ENCODE measurements at regions of chr20 and their contacts with region 1.

Region 1: DNA sequence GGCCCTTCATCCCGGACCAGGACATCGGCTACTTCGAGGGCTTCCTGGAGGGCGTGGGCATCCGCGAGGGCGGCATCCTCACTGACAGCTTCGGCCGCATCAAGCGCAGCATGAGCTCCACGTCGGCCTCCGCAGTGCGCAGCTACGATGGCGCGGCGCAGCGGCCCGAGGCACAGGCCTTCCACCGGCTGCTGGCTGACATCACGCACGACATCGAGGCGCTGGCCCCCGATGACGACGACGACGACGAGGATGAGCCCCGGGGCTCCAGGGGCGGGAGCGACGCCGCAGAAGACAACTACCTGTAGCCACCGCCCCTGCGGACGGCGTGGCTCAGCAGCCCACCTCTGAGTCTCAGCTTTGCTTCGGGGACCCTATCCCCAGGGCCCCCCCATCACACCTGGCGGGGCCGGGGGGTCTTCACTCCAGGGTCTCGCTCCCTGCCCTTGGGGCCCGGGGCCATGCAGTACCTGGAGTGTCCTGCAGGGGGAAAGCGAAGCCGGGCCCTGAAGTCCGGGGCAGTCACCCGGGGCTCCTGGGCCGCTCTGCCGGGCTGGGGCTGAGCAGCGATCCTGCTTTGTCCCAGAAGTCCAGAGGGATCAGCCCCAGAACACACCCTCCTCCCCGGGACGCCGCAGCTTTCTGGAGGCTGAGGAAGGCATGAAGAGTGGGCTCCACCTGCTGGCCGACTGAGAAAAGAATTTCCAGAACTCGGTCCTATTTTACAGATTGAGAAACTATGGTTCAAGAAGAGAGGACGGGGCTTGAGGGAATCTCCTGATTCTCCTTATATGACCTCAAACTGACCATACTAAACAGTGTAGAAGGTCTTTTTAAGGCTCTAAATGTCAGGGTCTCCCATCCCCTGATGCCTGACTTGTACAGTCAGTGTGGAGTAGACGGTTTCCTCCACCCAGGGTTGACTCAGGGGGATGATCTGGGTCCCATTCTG is 20.8 kb upstream of the HCK start:
- DNase-seq: peak in 2 of 3 donors; percentile 65 to 67
- H3K4me3 ChIP-seq: peak overlapping the region in 6 of 7 experiments; percentile 23 to 58 (median 50)
- H3K27ac ChIP-seq: no peak overlapping the region
- H3K4me1 ChIP-seq: peaks cover 2 to 16% (median 8%) of the 10 kb centered on the region in 4 experiments
- H3K27me3 ChIP-seq: peaks cover 0 to 5% (median 0%) of the 10 kb centered on the region in 5 experiments

Region 2: DNA sequence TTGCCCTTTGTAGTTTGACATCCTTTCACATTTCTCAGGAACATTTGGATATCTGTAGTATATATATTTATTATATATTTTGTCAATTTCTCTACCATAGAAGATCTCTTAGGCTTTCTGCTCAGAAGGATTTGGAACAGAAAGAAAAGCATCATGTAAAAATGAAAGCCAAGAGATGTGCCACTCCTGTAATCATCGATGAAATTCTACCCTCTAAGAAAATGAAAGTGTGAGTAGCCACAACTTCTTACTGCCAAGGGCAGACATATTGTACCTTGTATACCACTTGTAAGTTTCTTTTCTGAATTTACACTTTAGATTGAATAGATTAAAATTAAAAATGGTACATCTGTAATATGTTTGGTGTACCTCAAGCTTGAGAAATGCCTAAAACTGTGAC is 261.0 kb before region 1 on chr20:
- CTCF ChIA-PET with region 1: no interaction called
- POLR2A ChIA-PET with region 1: no interaction called
- DNase-seq: no peak
- H3K4me3 ChIP-seq: no peak overlapping the region
- H3K27ac ChIP-seq: no peak overlapping the region
- H3K4me1 ChIP-seq: no peaks in the 10 kb centered on the region
- H3K27me3 ChIP-seq: no peaks in the 10 kb centered on the region

Region 3: DNA sequence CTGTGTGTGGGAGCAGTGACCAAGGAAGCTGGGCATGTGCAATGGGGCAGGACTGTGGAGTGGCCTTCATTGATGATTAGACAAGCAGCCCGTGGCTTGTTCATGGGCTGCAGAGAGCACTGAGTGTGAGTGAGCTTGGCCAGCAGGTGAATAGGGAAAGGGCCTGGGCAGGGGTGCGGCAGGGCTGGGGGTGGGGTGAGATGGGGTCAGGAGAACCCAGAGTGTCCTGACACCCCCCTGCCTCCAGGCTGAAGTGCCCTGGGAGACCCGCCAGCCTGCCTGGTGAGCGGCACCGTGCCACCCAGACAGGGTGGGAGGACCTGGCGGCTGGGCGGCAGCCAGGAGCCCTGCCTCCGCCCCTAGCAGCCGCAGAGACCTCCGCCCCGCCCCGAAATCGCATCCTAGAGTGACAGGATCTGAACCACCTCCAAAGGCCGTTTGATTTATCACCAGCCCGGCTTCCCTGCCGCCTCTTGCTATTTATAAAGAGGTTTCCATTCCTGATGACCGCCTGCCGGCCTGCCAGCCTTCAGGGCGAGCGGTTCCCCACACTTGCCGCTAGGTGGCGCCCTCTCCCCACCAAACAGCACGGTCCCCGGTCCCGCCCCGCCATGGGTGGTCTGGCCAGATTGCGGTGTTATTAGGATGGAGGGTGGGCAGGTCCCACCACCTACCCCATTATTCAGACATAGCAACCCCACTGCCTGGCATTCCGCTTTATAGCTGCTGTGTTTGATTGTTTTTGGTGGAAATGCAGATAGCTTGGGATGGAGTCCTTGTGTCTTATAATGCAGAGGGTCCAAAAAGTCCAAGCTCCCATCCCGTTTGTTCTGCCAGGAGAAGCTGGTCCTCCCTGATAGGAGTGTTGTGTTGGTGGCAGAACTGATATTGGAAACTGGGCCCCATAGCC is 208.6 kb before region 1 on chr20:
- CTCF ChIA-PET with region 1: interaction called, 63 read pairs
- POLR2A ChIA-PET with region 1: interaction called, 3 read pairs
- DNase-seq: peak; percentile 69 to 87 (median 81)
- H3K4me3 ChIP-seq: peak overlapping the region in 3 of 7 experiments; percentile 32 to 48 (median 43)
- H3K27ac ChIP-seq: no peak overlapping the region
- H3K4me1 ChIP-seq: peaks cover 0 to 26% (median 19%) of the 10 kb centered on the region in 4 experiments
- H3K27me3 ChIP-seq: no peaks in the 10 kb centered on the region

Region 4: GRCh38 chr20:31857861-31858759 is 173.2 kb before region 1 on chr20:
- CTCF ChIA-PET with region 1: interaction called, 67 read pairs
- POLR2A ChIA-PET with region 1: no interaction called
- DNase-seq: peak in 2 of 3 donors; percentile 61 to 65
- H3K4me3 ChIP-seq: peak overlapping the region in 1 of 7 experiments; percentile 1
- H3K27ac ChIP-seq: no peak overlapping the region
- H3K4me1 ChIP-seq: peaks cover 0 to 42% (median 20%) of the 10 kb centered on the region in 4 experiments
- H3K27me3 ChIP-seq: peaks cover 0 to 18% (median 3%) of the 10 kb centered on the region in 5 experiments

Region 5: DNA sequence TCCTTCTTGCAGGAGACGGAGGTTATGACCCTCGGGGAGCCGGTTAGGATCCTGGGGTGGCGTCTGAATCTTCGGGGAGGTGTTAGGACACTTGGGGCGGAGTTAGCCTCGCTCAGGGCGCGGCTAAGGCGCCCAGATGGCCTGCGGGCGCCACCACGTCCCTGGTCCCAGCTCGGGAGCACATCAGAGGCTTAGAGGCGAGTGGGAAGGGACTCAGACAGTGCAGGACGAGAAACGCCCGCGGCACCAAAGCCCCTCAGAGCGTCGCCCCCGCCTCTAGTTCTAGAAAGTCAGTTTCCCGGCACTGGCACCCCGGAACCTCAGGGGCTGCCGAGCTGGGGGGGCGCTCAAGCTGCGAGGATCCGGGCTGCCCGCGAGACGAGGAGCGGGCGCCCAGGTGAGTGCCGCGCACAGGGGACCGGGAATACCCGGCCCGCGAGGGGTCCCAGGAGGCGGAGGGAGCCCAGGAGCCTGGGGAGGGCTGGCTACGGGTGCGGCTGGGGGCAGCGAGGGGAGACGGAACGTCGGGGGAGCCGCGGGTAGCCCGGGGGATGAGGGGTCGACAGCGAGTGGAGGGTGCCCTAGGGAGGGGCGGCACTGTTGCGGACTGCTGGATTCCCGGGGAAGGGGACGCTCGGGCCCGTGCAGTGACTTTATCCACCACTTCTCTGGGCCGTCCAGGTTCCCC is 21.0 kb after region 1 on chr20 and contains the start of gene HCK:
- CTCF ChIA-PET with region 1: interaction called, 70 read pairs
- POLR2A ChIA-PET with region 1: no interaction called
- DNase-seq: peak in 2 of 3 donors; percentile 46 to 58
- H3K4me3 ChIP-seq: peak within 1 kb of the TSS; percentile 31 to 85 (median 76)
- H3K27ac ChIP-seq: no peak within 1 kb of the TSS
- H3K4me1 ChIP-seq: peaks cover 9 to 51% (median 25%) of the 10 kb centered on the region in 4 experiments
- H3K27me3 ChIP-seq: peaks cover 0 to 7% (median 0%) of the 10 kb centered on the region in 5 experiments

Region 6: GRCh38 chr20:32072168-32072750 is 41.0 kb after region 1 on chr20:
- CTCF ChIA-PET with region 1: interaction called, 13 read pairs
- POLR2A ChIA-PET with region 1: no interaction called
- DNase-seq: no peak
- H3K4me3 ChIP-seq: no peak overlapping the region
- H3K27ac ChIP-seq: no peak overlapping the region
- H3K4me1 ChIP-seq: peaks cover 7 to 37% (median 11%) of the 10 kb centered on the region in 4 experiments
- H3K27me3 ChIP-seq: no peaks in the 10 kb centered on the region

Region 7: DNA sequence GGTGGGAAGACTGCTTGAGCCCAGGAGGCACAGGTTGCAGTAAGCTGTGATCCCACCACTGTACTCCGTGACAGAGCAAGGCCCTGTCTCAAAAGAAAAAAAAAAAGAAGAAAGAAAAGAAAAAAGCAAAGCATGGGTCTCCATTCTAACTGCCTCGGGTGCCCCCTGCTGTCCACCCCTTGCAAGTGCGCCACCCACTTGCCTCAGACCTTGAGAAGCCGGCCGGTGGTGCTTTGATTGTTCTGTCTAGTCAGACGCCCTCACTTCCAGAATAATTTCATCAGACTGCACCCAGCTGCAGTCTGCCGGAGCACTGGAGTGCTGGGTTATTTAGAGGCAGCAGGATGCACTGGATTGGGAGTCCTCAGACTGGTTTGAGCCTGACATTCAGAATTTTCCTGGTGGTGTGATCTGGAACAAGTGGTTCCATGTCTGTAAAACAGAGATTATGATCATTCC is 60.6 kb after region 1 on chr20:
- CTCF ChIA-PET with region 1: interaction called, 254 read pairs
- POLR2A ChIA-PET with region 1: interaction called, 3 read pairs
- DNase-seq: peak; percentile 77 to 89 (median 85)
- H3K4me3 ChIP-seq: no peak overlapping the region
- H3K27ac ChIP-seq: no peak overlapping the region
- H3K4me1 ChIP-seq: no peaks in the 10 kb centered on the region
- H3K27me3 ChIP-seq: no peaks in the 10 kb centered on the region